ENCODE measurements at regions of chr10 and their contacts with region 1.

Region 1: GRCh38 chr10:89426230-89426868 is 12.0 kb downstream of the IFIT5 start:
- DNase-seq: peak; percentile 75
- H3K4me3 ChIP-seq: no peak overlapping the region
- H3K27ac ChIP-seq: no peak overlapping the region
- H3K4me1 ChIP-seq: peaks cover 6% of the 10 kb centered on the region
- H3K27me3 ChIP-seq: no peaks in the 10 kb centered on the region
- CTCF ChIP-seq: peak; percentile 82

Region 2: GRCh38 chr10:89563861-89564478 is 137.6 kb after region 1 on chr10:
- CTCF ChIA-PET with region 1: no interaction called
- POLR2A ChIA-PET with region 1: no interaction called
- intact Hi-C with region 1: loop called (anchors 1 kb)
- DNase-seq: peak; percentile 63
- H3K4me3 ChIP-seq: no peak overlapping the region
- H3K27ac ChIP-seq: no peak overlapping the region
- H3K4me1 ChIP-seq: no peaks in the 10 kb centered on the region
- H3K27me3 ChIP-seq: no peaks in the 10 kb centered on the region
- CTCF ChIP-seq: peak; percentile 83

Region 3: GRCh38 chr10:89793649-89794254 is 367.4 kb after region 1 on chr10:
- CTCF ChIA-PET with region 1: no interaction called
- POLR2A ChIA-PET with region 1: no interaction called
- intact Hi-C with region 1: loop called (anchors 1 kb)
- DNase-seq: peak; percentile 78
- H3K4me3 ChIP-seq: no peak overlapping the region
- H3K27ac ChIP-seq: no peak overlapping the region
- H3K4me1 ChIP-seq: no peaks in the 10 kb centered on the region
- H3K27me3 ChIP-seq: peaks cover 1% of the 10 kb centered on the region
- CTCF ChIP-seq: peak; percentile 85

Region 4: DNA sequence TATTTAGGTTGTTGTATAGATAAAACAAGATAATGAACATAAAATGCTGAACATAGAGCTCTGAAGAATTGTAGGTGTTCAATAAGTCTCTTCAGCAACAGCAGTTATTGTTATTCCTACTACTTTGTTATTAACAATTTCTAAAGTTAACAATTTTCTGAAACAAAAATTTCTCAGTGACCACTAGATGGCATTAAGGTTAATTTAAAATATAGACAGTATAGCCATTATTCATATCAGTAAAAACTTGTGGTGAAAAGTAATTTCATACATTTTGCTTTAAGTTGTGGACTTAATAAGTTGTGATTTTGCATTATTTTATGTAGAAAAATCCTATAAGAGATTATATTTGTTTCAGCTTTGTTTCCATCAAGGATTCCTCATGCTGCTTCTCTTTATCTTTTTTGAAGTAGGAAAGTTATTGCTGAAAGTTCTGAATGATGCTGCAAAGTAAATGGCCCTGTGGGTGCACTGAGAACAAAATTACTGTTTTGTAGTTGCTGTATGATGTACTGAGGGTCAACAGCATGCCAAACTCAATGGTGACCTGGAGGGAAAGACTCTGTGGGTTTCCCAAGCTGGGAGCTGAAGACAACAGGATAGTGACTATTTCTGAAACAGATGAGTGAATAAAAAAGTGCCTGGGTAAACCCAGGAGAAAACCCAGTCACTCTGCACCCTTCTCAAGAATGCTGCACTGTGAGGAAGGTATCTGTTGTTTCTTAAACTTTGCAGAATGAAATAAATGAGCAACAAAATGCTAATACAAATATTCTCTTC is 528.6 kb after region 1 on chr10:
- CTCF ChIA-PET with region 1: no interaction called
- POLR2A ChIA-PET with region 1: no interaction called
- intact Hi-C with region 1: loop called (anchors 10 kb)
- DNase-seq: no peak
- H3K4me3 ChIP-seq: no peak overlapping the region
- H3K27ac ChIP-seq: no peak overlapping the region
- H3K4me1 ChIP-seq: no peaks in the 10 kb centered on the region
- H3K27me3 ChIP-seq: peaks cover 14% of the 10 kb centered on the region
- CTCF ChIP-seq: peak; percentile 59

Region 5: GRCh38 chr10:90007226-90007625 is 580.9 kb after region 1 on chr10:
- CTCF ChIA-PET with region 1: no interaction called
- POLR2A ChIA-PET with region 1: no interaction called
- intact Hi-C with region 1: no loop called
- DNase-seq: no peak
- H3K4me3 ChIP-seq: no peak overlapping the region
- H3K27ac ChIP-seq: no peak overlapping the region
- H3K4me1 ChIP-seq: no peaks in the 10 kb centered on the region
- H3K27me3 ChIP-seq: peaks cover 10% of the 10 kb centered on the region
- CTCF ChIP-seq: no peak

Region 6: GRCh38 chr10:90592638-90593302 is 1166.4 kb after region 1 on chr10:
- CTCF ChIA-PET with region 1: no interaction called
- POLR2A ChIA-PET with region 1: no interaction called
- intact Hi-C with region 1: loop called (anchors 2 kb)
- DNase-seq: peak; percentile 53
- H3K4me3 ChIP-seq: no peak overlapping the region
- H3K27ac ChIP-seq: no peak overlapping the region
- H3K4me1 ChIP-seq: no peaks in the 10 kb centered on the region
- H3K27me3 ChIP-seq: peaks cover 46% of the 10 kb centered on the region
- CTCF ChIP-seq: peak; percentile 41; the same call in 1 of the 2 replicates

Region 7: DNA sequence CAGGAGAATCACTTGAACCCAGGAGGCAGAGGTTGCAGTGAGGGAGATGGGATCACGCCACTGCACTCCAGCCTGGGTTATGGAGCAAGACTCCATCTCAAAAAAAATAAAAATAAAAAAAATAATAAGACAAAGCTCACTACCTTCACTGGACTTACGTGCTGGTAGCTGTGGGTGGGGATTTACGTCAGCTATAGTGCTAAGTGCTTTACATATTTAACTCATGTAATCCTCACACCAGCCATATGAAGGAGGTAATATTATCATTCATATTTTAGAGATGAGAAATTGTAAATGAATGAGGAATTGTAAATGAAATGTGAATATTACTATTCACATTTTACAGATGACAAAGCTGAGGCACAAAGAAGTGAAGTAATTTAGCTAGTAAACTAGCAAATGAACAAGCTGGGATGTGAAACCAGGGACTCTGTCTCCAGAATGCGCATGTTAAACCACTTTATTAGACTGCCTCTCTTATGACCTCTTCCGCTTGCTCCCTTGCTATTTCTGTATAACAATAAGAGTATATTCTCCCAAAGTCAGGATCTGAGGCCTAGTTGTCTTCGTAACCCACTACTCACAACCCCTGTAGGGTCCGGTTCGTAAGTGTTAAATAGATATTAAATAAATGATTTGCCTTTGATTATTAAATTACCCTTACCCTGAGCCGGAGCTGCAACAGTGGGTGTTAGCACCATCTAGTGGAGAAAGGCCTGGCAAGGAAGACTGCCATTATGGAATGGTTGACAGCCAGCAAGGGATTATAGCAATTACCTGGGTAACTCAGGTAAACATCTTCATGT is 1361.2 kb after region 1 on chr10:
- CTCF ChIA-PET with region 1: no interaction called
- POLR2A ChIA-PET with region 1: no interaction called
- intact Hi-C with region 1: loop called (anchors 5 kb)
- DNase-seq: peak; percentile 40
- H3K4me3 ChIP-seq: no peak overlapping the region
- H3K27ac ChIP-seq: no peak overlapping the region
- H3K4me1 ChIP-seq: no peaks in the 10 kb centered on the region
- H3K27me3 ChIP-seq: peaks cover 80% of the 10 kb centered on the region
- CTCF ChIP-seq: peak; percentile 85

Region 8: GRCh38 chr10:90862908-90863514 is 1436.7 kb after region 1 on chr10:
- CTCF ChIA-PET with region 1: no interaction called
- POLR2A ChIA-PET with region 1: no interaction called
- intact Hi-C with region 1: loop called (anchors 10 kb)
- DNase-seq: peak; percentile 46
- H3K4me3 ChIP-seq: no peak overlapping the region
- H3K27ac ChIP-seq: no peak overlapping the region
- H3K4me1 ChIP-seq: no peaks in the 10 kb centered on the region
- H3K27me3 ChIP-seq: peaks cover 80% of the 10 kb centered on the region
- CTCF ChIP-seq: peak; percentile 70